ENCODE measurements at regions of chr20 and their contacts with region 1.

Region 1: GRCh38 chr20:23937303-23938117 is 51.1 kb downstream of the GGTLC1 start:
- DNase-seq: peak; percentile 78
- H3K4me3 Mint-ChIP-seq: no peak overlapping the region
- H3K27ac Mint-ChIP-seq: no peak overlapping the region
- H3K4me1 Mint-ChIP-seq: no peaks in the 10 kb centered on the region
- H3K27me3 Mint-ChIP-seq: peaks cover 2% of the 10 kb centered on the region

Region 2: DNA sequence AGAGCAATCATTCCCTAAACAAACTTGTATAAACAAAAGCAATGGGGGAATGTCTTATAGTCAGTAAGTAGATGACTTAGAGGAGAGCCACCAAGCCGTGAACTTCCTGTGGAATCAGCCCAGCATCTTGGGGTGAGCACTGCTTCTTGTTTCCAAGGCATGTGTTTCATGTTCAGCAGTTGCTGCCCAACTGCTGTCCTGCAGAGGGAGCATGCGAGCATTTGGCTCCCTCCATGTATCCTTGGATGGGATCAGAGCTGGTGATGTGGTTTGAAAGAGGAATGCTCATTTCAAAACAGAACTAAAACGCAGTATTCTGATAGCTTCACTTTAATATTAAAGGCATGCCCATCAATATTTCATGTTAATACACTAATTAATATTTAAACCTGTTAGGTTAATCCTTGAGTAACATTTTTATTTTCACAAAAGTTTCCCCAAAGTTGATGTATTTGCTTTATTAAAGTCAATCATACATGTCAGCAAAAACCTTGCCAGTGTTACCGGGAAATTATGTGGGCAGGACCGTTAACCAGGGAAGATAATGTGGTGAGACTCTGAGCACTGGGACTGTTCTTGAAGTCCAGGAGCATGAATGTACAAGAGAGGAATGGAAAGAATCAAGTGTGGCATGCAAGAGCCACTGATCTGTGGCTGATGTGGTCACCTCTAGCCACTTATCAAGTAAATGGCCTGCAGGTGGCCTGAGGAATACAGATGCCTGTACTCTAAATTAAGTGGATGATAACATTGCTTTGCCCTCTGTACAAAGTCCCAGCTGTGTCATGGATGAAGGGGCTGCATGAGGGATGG is 223.3 kb after region 1 on chr20:
- CTCF ChIA-PET with region 1: interaction called, 3 read pairs
- intact Hi-C with region 1: loop called (anchors 1 kb)
- DNase-seq: peak; percentile 40
- H3K4me3 Mint-ChIP-seq: no peak overlapping the region
- H3K27ac Mint-ChIP-seq: no peak overlapping the region
- H3K4me1 Mint-ChIP-seq: no peaks in the 10 kb centered on the region
- H3K27me3 Mint-ChIP-seq: peaks cover 2% of the 10 kb centered on the region

Region 3: DNA sequence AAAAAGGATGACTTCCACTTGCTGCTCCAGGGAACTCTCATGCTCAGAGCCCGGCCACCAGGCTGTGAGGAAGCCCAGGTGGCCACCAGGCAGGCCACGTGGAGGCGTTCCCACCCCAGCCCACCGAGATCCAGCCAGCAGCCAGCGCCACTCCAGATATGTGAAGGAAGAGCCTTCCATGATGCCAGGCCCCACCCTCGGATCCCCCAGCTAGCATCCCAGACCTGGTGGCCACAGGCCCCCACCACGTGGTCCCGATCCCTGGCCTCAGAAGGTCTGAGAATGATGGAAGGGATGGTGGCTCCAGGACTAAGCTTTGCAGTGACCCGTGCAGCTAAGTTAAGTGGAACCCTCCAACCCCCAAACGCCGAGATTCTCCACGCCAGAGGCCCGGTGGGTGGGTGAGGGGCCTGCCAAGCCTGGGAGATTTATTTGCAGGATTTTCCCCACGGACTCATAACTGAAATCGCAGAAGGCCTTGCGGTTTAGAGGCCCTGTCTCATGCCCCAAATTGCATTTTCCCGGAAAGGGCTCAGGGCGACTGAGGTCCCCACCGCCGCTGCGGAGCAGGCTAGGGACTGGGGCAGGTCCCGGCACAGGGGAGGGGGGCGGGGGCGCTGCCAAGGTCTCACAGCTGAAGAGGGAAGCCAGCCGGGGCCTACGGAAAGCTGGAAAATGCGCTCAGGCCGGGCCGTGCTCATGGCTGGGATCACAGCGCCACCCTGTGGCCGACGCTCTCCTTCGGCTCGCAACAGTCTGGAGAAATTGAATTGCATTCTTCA is 980.5 kb after region 1 on chr20:
- CTCF ChIA-PET with region 1: interaction called, 3 read pairs
- intact Hi-C with region 1: loop called (anchors 1 kb)
- DNase-seq: peak; percentile 65
- H3K4me3 Mint-ChIP-seq: no peak overlapping the region
- H3K27ac Mint-ChIP-seq: no peak overlapping the region
- H3K4me1 Mint-ChIP-seq: peaks cover 5% of the 10 kb centered on the region
- H3K27me3 Mint-ChIP-seq: peaks cover 7% of the 10 kb centered on the region

Measured in activated naive CD4-positive, alpha-beta T cell treated with anti-CD3 and anti-CD28 coated beads for 36 hours (primary cell).